BJ (cell line): ENCODE measurements at regions of chr5 and their contacts with region 1.

Region 1: GRCh38 chr5:172071289-172071875 is 64.9 kb upstream of the FBXW11 start:
- DNase-seq: no peak
- H3K4me3 ChIP-seq: no peak overlapping the region
- H3K27me3 ChIP-seq: no peaks in the 10 kb centered on the region
- CTCF ChIP-seq: no peak

Region 2: GRCh38 chr5:172015346-172015745 is 56.0 kb before region 1 on chr5:
- CTCF ChIA-PET with region 1: no interaction called
- POLR2A ChIA-PET with region 1: no interaction called
- DNase-seq: no peak
- H3K4me3 ChIP-seq: no peak overlapping the region
- H3K27me3 ChIP-seq: no peaks in the 10 kb centered on the region
- CTCF ChIP-seq: no peak

Region 3: DNA sequence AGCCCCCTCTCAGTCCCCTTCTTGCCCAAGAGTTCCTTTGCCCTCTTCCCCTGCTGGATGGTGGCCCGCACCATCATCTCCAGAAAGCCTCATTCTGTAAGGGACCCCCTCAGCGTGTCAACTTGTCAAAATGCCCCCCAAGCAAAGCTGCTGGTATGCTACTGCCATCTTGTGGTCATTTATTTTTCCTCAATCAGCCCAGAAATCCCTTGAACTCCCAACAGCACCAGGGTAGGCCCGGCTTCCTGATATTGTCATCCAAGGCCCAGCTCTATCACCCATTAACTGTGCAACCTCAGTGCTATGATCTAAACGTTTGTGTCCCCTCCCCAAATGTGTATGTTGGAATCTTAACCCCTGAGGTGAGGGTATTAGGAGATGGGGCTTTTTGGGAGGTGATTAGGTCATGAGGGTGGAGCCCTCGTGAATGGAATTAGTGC is 11.7 kb before region 1 on chr5:
- CTCF ChIA-PET with region 1: interaction called, 18 read pairs
- POLR2A ChIA-PET with region 1: interaction called, 3 read pairs
- DNase-seq: no peak
- H3K4me3 ChIP-seq: no peak overlapping the region
- H3K27me3 ChIP-seq: no peaks in the 10 kb centered on the region
- CTCF ChIP-seq: peak; percentile 59